ENCODE measurements at regions of chr5 and their contacts with region 1.

Region 1: DNA sequence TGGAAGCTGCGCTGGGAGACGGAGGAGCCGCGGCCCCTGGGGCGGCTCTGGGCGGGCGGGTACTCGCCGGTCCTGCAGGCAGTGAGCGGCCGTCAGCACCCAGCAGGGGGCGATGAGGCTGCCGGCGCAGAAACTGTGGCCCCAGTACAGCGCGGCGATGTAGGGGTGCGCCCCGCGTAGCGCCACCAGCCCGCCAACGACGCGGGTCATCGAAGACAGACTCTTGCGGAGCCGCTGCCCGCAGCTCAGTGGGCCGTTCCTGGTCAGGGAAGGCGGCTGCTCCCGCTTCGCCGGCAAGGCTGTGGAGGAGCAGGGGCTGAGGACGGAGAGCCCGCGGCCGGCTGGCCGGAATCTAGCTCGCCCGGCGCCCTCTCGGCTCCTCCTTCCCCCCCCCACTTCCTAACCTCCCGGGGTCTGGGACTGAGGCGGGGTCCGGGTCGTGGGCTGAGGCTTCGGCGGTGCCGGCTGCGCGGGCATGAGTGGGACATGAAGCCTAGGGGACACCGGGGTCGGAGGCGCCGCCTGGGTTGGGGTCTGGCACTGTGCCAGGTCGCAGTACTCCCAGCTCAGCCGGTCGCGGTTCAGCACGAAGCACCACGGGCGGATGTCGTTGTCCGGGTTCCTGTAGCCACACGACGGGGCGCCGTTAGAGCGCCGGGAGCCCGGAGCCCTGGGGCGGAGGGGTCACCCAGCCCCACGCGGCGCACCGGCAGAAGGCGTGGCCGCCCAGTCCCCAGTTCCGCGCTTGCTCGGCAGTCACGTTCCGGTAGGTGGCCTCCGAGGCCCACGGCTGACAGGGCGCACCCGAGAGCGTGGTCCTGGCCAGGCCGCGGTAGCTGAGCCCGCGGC is 3.6 kb upstream of the PFN3 start:
- DNase-seq: peak; percentile 90
- ATAC-seq: peak; percentile 89
- H3K4me3 Mint-ChIP-seq: peak overlapping the region; percentile 64
- H3K27ac Mint-ChIP-seq: peak overlapping the region; percentile 63
- H3K4me1 Mint-ChIP-seq: peaks cover 37% of the 10 kb centered on the region
- H3K27me3 Mint-ChIP-seq: peaks cover 23% of the 10 kb centered on the region

Region 2: DNA sequence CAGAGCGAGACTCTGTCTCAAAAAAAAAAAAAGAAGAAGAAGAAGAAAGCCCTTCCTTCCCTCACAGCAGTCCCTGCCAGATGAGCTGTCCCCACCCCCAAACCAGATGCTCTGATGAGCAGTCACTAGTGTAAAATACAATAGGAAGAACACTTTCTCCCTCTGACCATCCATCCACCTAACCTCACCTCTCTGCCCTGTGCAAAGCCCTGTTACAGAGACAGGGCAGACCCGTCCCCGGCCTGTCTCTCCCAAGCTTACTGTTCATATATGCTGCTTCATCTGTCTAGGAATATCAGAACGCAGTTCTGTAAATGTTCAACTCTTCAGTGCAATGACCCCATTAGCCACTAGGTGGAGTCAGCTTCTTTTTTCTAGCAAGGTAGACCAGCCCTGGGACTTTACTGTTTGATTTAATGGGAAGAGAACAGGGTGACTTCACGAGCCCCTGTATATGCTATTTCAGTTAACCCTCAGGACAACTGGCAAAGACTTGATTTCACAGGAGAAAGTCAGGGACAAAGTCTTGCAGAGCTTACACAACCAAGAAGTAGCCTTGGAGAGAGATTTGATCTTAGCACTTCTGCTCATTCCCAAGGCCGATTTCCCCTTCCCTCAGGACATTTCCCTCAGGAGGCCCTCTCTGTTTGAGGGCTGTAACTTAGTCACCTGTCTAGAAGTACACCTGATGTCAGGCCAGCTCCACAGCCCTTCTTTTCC is 332.2 kb before region 1 on chr5:
- CTCF ChIA-PET with region 1: no interaction called
- DNase-seq: peak; percentile 76
- ATAC-seq: peak; percentile 79
- H3K4me3 Mint-ChIP-seq: no peak overlapping the region
- H3K27ac Mint-ChIP-seq: peak overlapping the region; percentile 34
- H3K4me1 Mint-ChIP-seq: peaks cover 11% of the 10 kb centered on the region
- H3K27me3 Mint-ChIP-seq: no peaks in the 10 kb centered on the region

Region 3: GRCh38 chr5:177113566-177114424 is 290.2 kb before region 1 on chr5:
- CTCF ChIA-PET with region 1: interaction called, 10 read pairs
- DNase-seq: peak; percentile 86
- ATAC-seq: peak; percentile 60
- H3K4me3 Mint-ChIP-seq: no peak overlapping the region
- H3K27ac Mint-ChIP-seq: peak overlapping the region; percentile 60
- H3K4me1 Mint-ChIP-seq: peaks cover 30% of the 10 kb centered on the region
- H3K27me3 Mint-ChIP-seq: no peaks in the 10 kb centered on the region

Region 4: DNA sequence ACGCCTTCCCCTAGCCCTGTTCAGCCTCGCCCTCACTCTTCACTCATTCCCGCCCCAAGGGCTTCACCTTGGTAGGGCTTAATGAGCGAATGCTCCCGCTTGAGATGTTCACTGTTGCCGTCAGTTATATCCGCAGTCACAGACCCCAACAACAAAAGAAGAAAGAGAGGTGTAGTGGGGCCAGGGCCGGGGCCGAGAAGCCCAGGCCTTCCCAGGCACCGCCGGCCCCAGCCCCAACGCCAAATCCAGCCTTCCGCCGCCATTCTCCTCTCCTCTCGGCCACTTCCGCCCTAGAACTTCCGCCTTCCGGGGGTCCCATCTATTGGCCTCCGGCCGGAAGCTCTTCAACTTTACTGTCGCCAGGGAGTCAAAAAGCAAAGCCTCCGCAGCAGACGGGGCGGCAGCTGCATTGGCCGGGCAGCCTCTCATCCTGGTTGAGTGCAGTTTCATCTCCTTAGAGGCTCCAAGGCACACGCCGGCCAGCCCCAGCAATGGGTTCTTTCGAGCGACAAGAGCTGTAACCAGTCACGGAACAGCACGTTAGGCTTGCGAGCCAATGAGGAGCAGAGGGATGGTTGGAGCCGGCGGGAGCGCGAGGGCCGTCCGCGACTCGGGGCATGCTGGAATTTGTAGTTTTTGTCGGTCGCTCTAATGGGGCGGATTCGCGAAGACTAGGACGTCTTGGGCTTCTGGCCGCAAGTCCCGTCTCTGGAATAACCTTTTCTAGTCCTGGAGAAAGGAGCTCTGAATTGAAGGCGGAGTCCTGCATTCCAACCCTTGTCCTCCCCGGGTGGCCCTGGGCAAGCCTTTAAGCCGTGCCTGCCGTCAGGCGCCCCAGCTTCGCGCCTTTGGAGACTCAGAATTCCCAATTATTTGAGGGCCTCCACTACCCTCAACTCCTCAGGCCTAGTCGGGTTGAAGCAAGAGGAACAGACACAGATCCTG is 52.4 kb before region 1 on chr5 and contains the start of gene LMAN2:
- CTCF ChIA-PET with region 1: interaction called, 46 read pairs
- DNase-seq: peak; percentile 96
- ATAC-seq: peak; percentile 99
- H3K4me3 Mint-ChIP-seq: peak within 1 kb of the TSS; percentile 98
- H3K27ac Mint-ChIP-seq: peak within 1 kb of the TSS; percentile 100
- H3K4me1 Mint-ChIP-seq: peaks cover 65% of the 10 kb centered on the region
- H3K27me3 Mint-ChIP-seq: no peaks in the 10 kb centered on the region
- total RNA-seq, gene LMAN2: 133 to 140 TPM

Region 5: DNA sequence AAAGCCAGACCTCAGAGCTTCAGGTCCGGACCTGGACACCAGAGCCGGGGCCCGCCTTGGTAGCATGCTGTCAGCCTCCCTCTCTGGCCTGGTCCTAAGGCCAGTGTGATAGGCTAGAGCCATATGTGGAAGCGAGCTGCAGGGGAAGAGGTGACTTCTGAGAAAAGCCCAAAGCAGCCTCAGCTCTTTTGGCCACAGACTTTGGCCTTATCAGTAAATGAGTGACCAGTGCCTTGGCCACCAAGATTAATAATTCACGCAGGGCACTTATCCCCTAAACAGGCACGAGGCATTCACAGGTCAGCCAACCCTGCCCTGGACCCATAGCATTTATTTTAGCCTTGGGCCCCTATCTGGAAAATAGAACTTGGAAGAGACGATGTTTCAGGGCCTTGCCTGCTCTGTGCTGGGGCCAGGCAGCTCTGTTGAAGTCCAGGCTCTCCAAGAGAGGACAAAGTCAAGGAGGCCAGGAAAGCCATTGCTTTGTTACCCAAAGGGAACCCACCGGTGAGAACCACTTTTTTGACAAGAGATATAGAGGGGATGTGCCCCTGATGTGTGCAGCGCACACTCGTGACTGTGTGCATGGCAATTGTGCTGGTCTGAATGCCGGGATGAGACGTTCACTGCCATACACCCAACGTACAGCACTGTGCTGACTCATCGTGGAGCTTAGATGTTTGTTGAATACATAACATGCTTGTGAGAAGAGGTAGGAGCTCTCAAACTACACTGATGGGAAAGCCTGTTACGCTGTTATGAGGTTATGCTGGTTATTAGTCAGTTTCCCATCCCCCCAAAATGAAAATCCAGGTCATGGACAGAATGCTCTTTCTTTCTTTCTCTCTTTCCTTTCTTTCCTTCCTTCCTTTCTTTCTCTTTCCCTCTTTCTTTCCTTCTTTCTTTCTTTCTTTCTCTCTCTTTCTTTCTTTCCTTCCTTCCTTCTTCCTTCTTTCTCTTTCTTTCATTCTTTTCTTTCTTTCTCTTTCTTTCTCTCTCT is 24.8 kb before region 1 on chr5:
- CTCF ChIA-PET with region 1: interaction called, 19 read pairs
- DNase-seq: no peak
- ATAC-seq: peak; percentile 87
- H3K4me3 Mint-ChIP-seq: no peak overlapping the region
- H3K27ac Mint-ChIP-seq: peak overlapping the region; percentile 42
- H3K4me1 Mint-ChIP-seq: peaks cover 17% of the 10 kb centered on the region
- H3K27me3 Mint-ChIP-seq: no peaks in the 10 kb centered on the region

Region 6: DNA sequence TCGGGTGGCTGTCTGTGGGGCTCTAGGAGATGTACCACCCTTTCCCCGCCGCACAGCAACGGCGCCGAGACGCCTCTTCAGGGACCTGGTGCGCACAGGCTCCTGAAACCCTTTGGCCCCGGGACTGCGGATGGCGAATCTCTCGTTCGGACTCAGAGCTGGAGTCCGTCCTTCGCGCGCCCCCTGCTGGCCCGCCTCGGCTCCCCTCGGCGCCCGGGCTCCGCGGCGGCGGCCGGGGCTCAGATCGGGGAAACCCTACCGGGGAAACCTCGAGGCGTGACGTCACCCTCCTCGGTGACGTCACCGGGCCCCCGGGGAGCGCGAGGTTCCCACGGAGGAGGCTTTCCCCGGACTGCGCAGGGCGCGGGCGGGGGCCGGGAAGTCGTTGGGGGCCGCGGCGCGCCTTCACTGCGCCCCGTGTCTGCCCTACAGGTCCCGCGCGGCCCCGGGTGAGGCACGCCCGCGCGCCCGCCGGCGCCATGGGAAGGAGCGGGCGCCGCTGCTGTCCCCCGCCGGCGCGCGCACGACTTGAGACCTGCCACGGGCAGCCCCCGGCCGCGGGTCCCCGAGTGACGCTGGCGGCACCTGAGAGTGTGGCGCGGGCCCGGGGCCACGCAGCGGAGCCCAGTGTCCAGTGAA is 50.5 kb after region 1 on chr5:
- CTCF ChIA-PET with region 1: interaction called, 717 read pairs
- DNase-seq: peak; percentile 93
- ATAC-seq: peak; percentile 60
- H3K4me3 Mint-ChIP-seq: peak overlapping the region; percentile 78
- H3K27ac Mint-ChIP-seq: no peak overlapping the region
- H3K4me1 Mint-ChIP-seq: peaks cover 18% of the 10 kb centered on the region
- H3K27me3 Mint-ChIP-seq: peaks cover 5% of the 10 kb centered on the region

Region 7: GRCh38 chr5:177478711-177479646 is 75.0 kb after region 1 on chr5:
- CTCF ChIA-PET with region 1: interaction called, 16 read pairs
- DNase-seq: peak; percentile 67
- ATAC-seq: peak; percentile 75
- H3K4me3 Mint-ChIP-seq: no peak overlapping the region
- H3K27ac Mint-ChIP-seq: peak overlapping the region; percentile 90
- H3K4me1 Mint-ChIP-seq: peaks cover 45% of the 10 kb centered on the region
- H3K27me3 Mint-ChIP-seq: no peaks in the 10 kb centered on the region